H1 (cell line): ENCODE measurements at regions of chr14 and their contacts with region 1.

Region 1: GRCh38 chr14:94548999-94549985 is 11.9 kb upstream of the SERPINA4 start:
- DNase-seq: peak; percentile 80 to 98
- H3K4me3 ChIP-seq: no peak overlapping the region
- H3K27ac ChIP-seq: no peak overlapping the region
- H3K4me1 ChIP-seq: peaks cover 0 to 8% (median 5%) of the 10 kb centered on the region in 4 experiments
- H3K27me3 ChIP-seq: no peaks in the 10 kb centered on the region
- CTCF ChIP-seq: peak; percentile 78 to 90 (median 86)
- EP300 ChIP-seq: no peak
- POLR2A ChIP-seq: no peak
- RAD21 ChIP-seq: peak; percentile 85 to 90

Region 2: GRCh38 chr14:94423453-94424056 is 125.7 kb before region 1 on chr14:
- CTCF ChIA-PET with region 1: interaction called, 24 read pairs
- POLR2A ChIA-PET with region 1: no interaction called
- DNase-seq: peak; percentile 67 to 88
- H3K4me3 ChIP-seq: no peak overlapping the region
- H3K27ac ChIP-seq: no peak overlapping the region
- H3K4me1 ChIP-seq: 0 out of 7 replicates have a peak, but pooled peaks cover 0 to 2% (median 0%) of the 10 kb centered on the region in 4 experiments
- H3K27me3 ChIP-seq: no peaks in the 10 kb centered on the region
- CTCF ChIP-seq: peak; percentile 62 to 88 (median 83)
- EP300 ChIP-seq: no peak
- POLR2A ChIP-seq: no peak
- RAD21 ChIP-seq: peak; percentile 72 to 80

Region 3: DNA sequence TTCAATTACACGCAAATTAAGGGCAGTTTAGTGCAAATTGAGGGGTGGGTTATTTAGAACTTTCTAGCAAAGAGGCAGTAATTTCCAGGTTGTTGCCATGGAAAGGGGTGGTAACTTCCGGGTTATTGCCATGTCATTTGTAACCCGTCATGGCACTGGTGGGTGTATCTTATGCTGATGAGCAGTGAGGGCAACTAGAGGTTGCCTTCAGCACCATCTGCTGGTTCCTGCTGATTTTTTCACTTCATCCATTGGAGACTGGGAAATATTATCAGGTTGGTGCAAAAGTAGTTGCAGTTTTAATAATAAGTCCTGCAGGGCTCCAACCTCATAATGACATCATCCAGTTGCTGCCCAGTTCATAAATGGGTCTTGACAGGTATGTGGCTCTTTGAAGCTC is 12.5 kb before region 1 on chr14:
- CTCF ChIA-PET with region 1: interaction called, 46 read pairs
- POLR2A ChIA-PET with region 1: interaction called, 3 read pairs
- DNase-seq: no peak
- H3K4me3 ChIP-seq: no peak overlapping the region
- H3K27ac ChIP-seq: no peak overlapping the region
- H3K4me1 ChIP-seq: peaks cover 0 to 2% (median 0%) of the 10 kb centered on the region in 4 experiments; a peak in 2 of 7 replicates
- H3K27me3 ChIP-seq: peaks cover 0 to 3% (median 0%) of the 10 kb centered on the region in 4 experiments; a peak in 1 of 7 replicates
- CTCF ChIP-seq: peak in 2 of 3 experiments; percentile 33 to 50; a peak in 3 of 4 replicates
- EP300 ChIP-seq: no peak
- POLR2A ChIP-seq: no peak
- RAD21 ChIP-seq: peak; percentile 47 to 63

Region 4: DNA sequence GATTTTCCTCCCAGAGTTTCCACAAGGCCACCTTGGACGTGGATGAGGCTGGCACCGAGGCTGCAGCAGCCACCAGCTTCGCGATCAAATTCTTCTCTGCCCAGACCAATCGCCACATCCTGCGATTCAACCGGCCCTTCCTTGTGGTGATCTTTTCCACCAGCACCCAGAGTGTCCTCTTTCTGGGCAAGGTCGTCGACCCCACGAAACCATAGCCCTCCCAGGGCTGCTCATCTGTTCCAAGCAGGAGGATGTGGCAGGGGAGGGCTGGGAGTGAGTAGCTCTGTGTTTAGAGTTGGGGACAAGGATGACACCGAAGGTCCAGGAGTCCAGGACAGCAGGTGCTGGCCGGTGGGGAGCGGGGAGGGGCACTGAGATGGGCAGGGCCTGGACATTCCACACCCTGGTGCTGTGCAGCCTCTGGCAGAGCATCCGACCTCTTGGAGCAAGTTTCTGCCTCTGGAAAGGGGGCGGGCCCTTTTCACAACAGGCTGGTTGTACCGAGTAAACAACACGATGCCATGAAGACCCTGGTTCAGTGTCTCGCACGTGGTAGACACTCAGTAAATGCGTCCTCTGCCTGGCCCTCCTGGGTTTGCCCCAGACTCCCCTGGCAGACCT is 20.2 kb after region 1 on chr14:
- CTCF ChIA-PET with region 1: interaction called, 10 read pairs
- POLR2A ChIA-PET with region 1: no interaction called
- DNase-seq: no peak
- H3K4me3 ChIP-seq: no peak overlapping the region
- H3K27ac ChIP-seq: no peak overlapping the region
- H3K4me1 ChIP-seq: no peaks in the 10 kb centered on the region
- H3K27me3 ChIP-seq: no peaks in the 10 kb centered on the region
- CTCF ChIP-seq: no peak
- EP300 ChIP-seq: no peak
- POLR2A ChIP-seq: no peak
- RAD21 ChIP-seq: no peak

Region 5: GRCh38 chr14:94659901-94660300 is 110.6 kb after region 1 on chr14:
- CTCF ChIA-PET with region 1: no interaction called
- POLR2A ChIA-PET with region 1: no interaction called
- DNase-seq: no peak
- H3K4me3 ChIP-seq: no peak overlapping the region
- H3K27ac ChIP-seq: no peak overlapping the region
- H3K4me1 ChIP-seq: no peaks in the 10 kb centered on the region
- H3K27me3 ChIP-seq: no peaks in the 10 kb centered on the region
- CTCF ChIP-seq: no peak
- EP300 ChIP-seq: no peak
- POLR2A ChIP-seq: no peak
- RAD21 ChIP-seq: no peak